ENCODE measurements at regions of chr20 and their contacts with region 1.

Region 1: GRCh38 chr20:42530822-42531448 is 658.8 kb downstream of the PTPRT start:
- DNase-seq: no peak
- H3K4me3 ChIP-seq: no peak overlapping the region
- H3K27ac ChIP-seq: no peak overlapping the region
- H3K4me1 ChIP-seq: no peaks in the 10 kb centered on the region
- H3K27me3 ChIP-seq: no peaks in the 10 kb centered on the region
- CTCF ChIP-seq: peak; percentile 37 to 56 (median 43)
- EP300 ChIP-seq: no peak
- POLR2A ChIP-seq: no peak

Region 2: DNA sequence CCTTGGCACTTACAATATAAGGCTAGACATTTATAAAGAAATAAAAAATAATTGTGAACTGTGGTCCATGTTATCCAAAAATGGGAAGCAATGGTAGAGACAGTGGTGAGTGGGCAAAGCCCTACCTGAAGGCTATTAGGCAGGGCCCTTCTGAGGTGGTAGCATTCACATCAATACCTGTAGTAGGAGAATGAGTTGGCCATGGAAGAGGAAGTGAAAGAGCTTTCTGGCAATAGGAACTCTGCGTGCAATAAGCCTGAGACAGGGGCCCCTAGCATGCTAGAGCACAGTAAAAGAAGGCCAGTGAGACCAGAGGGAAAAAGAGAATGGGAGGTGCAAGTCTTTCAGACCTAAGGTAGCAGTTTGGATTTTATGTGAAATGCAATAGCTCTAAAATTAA is 95.7 kb before region 1 on chr20:
- in situ Hi-C with region 1: loop called in 1 of 4 experiments (anchors 25 kb)
- intact Hi-C with region 1: no loop called
- DNase-seq: no peak
- H3K4me3 ChIP-seq: no peak overlapping the region
- H3K27ac ChIP-seq: no peak overlapping the region
- H3K4me1 ChIP-seq: no peaks in the 10 kb centered on the region
- H3K27me3 ChIP-seq: no peaks in the 10 kb centered on the region
- CTCF ChIP-seq: no peak
- EP300 ChIP-seq: no peak
- POLR2A ChIP-seq: no peak

Region 3: GRCh38 chr20:42740226-42740870 is 209.4 kb after region 1 on chr20:
- in situ Hi-C with region 1: no loop called
- intact Hi-C with region 1: no loop called
- DNase-seq: no peak
- H3K4me3 ChIP-seq: no peak overlapping the region
- H3K27ac ChIP-seq: no peak overlapping the region
- H3K4me1 ChIP-seq: no peaks in the 10 kb centered on the region
- H3K27me3 ChIP-seq: no peaks in the 10 kb centered on the region
- CTCF ChIP-seq: no peak
- EP300 ChIP-seq: no peak
- POLR2A ChIP-seq: no peak